A549 (cell line): ENCODE measurements at regions of chr16 and their contacts with region 1.

Region 1: DNA sequence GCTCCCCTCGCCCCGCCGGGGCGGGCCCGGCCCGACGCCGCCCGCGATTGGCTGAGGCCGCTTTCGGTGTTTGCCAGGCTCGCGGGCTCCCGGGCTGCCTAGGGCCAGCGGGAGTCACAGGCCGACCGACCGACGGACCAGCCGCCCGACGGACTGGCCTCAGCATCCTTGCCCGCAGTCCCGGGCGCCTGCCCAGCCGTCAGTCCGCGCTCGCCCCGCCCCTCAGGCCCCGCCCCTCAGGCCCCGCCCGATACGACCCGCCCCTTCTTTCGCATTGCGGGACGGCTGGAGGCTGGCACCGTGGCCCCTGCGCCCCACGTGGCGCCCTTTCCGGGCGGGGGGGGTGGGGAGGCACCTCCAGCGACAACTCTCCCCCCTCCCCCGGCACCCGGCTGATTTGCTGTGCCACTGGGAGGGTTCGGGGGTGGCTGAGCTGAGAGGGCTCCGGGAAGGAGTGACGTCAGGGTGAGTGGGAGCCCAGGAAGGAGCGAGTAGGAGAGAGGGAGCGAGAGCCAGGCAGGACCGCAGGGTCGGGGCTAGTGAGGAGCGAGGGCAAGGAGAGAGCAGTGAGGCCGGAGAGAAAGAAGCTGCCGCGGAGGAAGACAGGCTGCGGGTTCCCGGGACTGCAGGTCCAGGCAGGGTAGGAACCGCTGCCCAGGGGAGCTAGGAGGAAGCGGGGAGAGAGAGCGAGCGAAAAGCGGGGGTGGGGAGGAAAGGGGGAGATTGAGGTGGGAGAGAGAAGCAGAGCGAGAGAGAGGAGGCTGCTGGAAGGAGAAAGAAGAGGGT is at the start of gene ASPHD1:
- DNase-seq: peak; percentile 77 to 87
- ATAC-seq: peak; percentile 73 to 79
- H3K4me3 ChIP-seq: peak within 1 kb of the TSS; percentile 68
- H3K27ac ChIP-seq: peak within 1 kb of the TSS; percentile 80 to 88
- H3K4me1 ChIP-seq: peaks cover 16% of the 10 kb centered on the region
- CTCF ChIP-seq: no peak
- EP300 ChIP-seq: no peak
- POLR2A ChIP-seq: no peak; the same call in 1 of the 2 replicates
- RAD21 ChIP-seq: no peak
- polyA plus RNA-seq, gene ASPHD1: 3.7 and 4.6 TPM in 2 replicates

Region 2: GRCh38 chr16:29915590-29916247 is 15.4 kb after region 1 on chr16:
- CTCF ChIA-PET with region 1: interaction called, 12 read pairs
- POLR2A ChIA-PET with region 1: interaction called, 7 read pairs
- DNase-seq: peak; percentile 29 to 37
- ATAC-seq: peak in 1 of 2 experiments; percentile 30; a peak in 2 of 6 replicates
- H3K4me3 ChIP-seq: no peak overlapping the region
- H3K27ac ChIP-seq: peak overlapping the region in 1 of 2 experiments; percentile 58; a peak in 2 of 6 replicates
- H3K4me1 ChIP-seq: peaks cover 9% of the 10 kb centered on the region; the same call in 2 of the 3 replicates
- CTCF ChIP-seq: no peak
- EP300 ChIP-seq: no peak
- POLR2A ChIP-seq: no peak
- RAD21 ChIP-seq: no peak